PC-3 (cell line): ENCODE measurements at regions of chr1 and their contacts with region 1.

Region 1: GRCh38 chr1:219973213-219973612 is 44.9 kb upstream of the SLC30A10 start:
- DNase-seq: no peak
- ATAC-seq: no peak
- H3K4me3 ChIP-seq: no peak overlapping the region
- H3K27ac ChIP-seq: no peak overlapping the region
- H3K4me1 ChIP-seq: no peaks in the 10 kb centered on the region
- H3K27me3 ChIP-seq: no peaks in the 10 kb centered on the region
- CTCF ChIP-seq: no peak

Region 2: GRCh38 chr1:219792337-219793021 is 180.7 kb before region 1 on chr1:
- CTCF ChIA-PET with region 1: no interaction called
- POLR2A ChIA-PET with region 1: no interaction called
- intact Hi-C with region 1: no loop called
- DNase-seq: no peak
- ATAC-seq: no peak
- H3K4me3 ChIP-seq: no peak overlapping the region
- H3K27ac ChIP-seq: no peak overlapping the region
- H3K4me1 ChIP-seq: peaks cover 16% of the 10 kb centered on the region
- H3K27me3 ChIP-seq: no peaks in the 10 kb centered on the region
- CTCF ChIP-seq: no peak

Region 3: DNA sequence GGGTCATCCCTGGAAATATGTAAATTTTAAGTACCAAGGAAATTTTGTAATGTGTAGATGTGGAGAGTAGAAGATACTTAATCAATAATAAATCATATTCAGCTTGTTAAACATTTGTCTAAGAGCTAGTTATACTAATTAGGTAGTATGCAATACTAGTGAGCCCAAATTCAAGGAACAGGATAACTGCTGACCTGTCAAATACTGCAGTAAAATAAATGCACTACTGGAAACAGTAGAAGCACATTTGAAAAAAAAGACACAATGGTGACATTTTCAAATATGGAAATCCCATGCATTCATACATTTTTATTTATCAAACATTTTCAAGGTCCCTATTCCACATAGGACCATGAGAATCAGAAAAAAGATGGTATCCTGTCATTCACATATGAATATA is 45.9 kb after region 1 on chr1:
- CTCF ChIA-PET with region 1: no interaction called
- POLR2A ChIA-PET with region 1: no interaction called
- intact Hi-C with region 1: loop called (anchors 5 kb)
- DNase-seq: no peak
- ATAC-seq: no peak
- H3K4me3 ChIP-seq: no peak overlapping the region
- H3K27ac ChIP-seq: no peak overlapping the region
- H3K4me1 ChIP-seq: no peaks in the 10 kb centered on the region
- H3K27me3 ChIP-seq: no peaks in the 10 kb centered on the region
- CTCF ChIP-seq: no peak